Activated CD4-positive, alpha-beta T cell treated with anti-CD3 and anti-CD28 coated beads for 36 hours (primary cell): ENCODE measurements at regions of chr17 and their contacts with region 1.

Region 1: DNA sequence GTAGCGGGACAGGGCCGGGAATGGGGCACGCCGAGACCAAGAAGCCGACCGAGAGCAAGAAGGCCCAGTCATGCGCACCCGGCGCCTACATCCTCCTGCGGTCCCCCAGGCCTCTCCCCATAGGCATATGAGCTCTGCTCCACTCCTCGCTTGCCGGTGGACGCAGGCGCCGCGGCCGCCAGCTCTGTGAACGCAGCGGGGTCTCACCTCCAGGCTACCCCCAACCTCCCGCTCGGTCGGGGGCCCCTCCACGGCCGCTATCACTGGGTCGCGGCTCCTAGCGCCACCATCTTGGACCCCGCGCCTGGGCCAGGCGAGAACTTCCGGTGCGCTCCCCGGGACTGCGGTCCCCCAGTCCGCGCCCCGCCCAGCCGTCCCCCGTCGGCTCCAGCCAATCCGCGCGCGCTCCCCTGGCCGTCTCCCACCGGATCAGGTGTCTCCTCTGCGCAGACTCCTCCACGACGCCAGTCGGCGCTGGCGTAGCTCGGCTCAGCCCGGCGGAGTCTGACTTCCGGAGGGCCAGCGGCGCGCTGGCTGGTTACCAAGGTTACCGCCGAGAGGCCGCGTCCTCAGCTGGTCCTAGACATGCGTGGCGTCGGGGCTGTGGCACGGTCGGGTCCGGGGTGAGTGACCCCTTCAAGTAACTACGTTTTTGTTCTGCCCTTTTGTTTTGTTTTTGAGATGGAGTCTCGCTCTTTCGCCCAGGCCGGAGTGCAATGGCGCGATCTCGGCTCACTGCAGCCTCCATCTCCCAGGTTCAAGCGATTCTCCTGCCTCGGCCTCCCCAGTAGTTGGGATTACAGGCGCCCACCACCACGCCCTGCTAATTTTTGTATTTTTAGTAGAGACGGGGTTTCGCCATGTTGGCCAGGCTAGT is at the start of gene ZNF594:
- DNase-seq: peak; percentile 99
- ATAC-seq: peak; percentile 100
- H3K4me3 Mint-ChIP-seq: peak within 1 kb of the TSS; percentile 94
- H3K27ac Mint-ChIP-seq: peak within 1 kb of the TSS; percentile 88
- H3K4me1 Mint-ChIP-seq: peaks cover 27% of the 10 kb centered on the region
- H3K27me3 Mint-ChIP-seq: no peaks in the 10 kb centered on the region
- total RNA-seq, gene ZNF594: 8.0 to 8.4 TPM

Region 2: GRCh38 chr17:4263282-4264215 is 928.2 kb before region 1 on chr17 and contains the start of gene ANKFY1:
- CTCF ChIA-PET with region 1: no interaction called
- POLR2A ChIA-PET with region 1: no interaction called
- intact Hi-C with region 1: loop called in 1 of 2 experiments (anchors 5 kb)
- DNase-seq: peak; percentile 99
- ATAC-seq: peak; percentile 99
- H3K4me3 Mint-ChIP-seq: peak within 1 kb of the TSS; percentile 97
- H3K27ac Mint-ChIP-seq: peak within 1 kb of the TSS; percentile 96
- H3K4me1 Mint-ChIP-seq: peaks cover 35% of the 10 kb centered on the region
- H3K27me3 Mint-ChIP-seq: no peaks in the 10 kb centered on the region
- total RNA-seq, gene ANKFY1: 39.8 to 40.7 TPM

Region 3: GRCh38 chr17:4998027-4998741 is 193.6 kb before region 1 on chr17:
- CTCF ChIA-PET with region 1: no interaction called
- POLR2A ChIA-PET with region 1: no interaction called
- intact Hi-C with region 1: no loop called
- DNase-seq: peak; percentile 31
- ATAC-seq: no peak
- H3K4me3 Mint-ChIP-seq: peak overlapping the region; percentile 80
- H3K27ac Mint-ChIP-seq: peak overlapping the region; percentile 55
- H3K4me1 Mint-ChIP-seq: peaks cover 20% of the 10 kb centered on the region
- H3K27me3 Mint-ChIP-seq: no peaks in the 10 kb centered on the region

Region 4: DNA sequence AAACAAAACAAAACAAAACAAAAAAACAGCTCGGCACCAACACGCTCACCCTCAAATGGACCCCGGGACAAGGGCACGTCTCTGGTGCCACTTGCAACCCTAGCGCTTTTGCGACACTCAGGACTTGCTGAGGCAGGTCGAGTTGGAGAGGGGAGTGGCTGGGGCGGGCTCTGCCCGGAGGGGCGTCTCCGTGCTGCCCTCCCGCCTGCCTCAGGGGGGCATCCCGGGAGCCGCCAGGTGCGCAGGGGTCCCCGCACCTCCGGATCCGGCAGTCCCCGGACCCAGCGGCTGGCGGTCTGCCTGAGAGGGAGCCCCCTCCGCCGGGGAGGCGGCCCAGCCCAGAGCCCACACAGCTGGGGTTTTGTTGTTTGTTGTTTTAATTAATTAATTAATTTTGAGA is 156.5 kb before region 1 on chr17 and contains the start of gene SLC52A1:
- CTCF ChIA-PET with region 1: no interaction called
- POLR2A ChIA-PET with region 1: no interaction called
- intact Hi-C with region 1: no loop called
- DNase-seq: no peak
- ATAC-seq: no peak
- H3K4me3 Mint-ChIP-seq: no peak within 1 kb of the TSS
- H3K27ac Mint-ChIP-seq: no peak within 1 kb of the TSS
- H3K4me1 Mint-ChIP-seq: peaks cover 17% of the 10 kb centered on the region
- H3K27me3 Mint-ChIP-seq: peaks cover 3% of the 10 kb centered on the region
- total RNA-seq, gene SLC52A1: 0.16 to 0.26 TPM

Region 5: DNA sequence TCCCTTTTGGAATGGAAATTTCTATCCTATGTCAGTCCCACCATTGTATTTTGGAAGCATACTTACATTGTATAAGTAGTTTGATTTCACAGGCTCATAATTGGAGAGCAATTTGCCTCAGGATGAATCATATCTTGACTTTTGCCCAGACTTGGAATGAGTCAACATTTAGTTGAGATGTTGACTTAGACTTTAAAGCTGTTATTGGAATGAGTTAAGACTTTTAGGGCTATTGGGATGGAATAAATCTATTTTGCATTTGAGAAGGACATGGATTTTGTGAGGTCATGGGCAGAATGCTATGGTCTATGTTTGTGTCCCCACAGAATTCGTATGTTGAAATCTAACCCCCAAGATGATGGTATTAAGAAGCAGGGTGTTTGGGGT is 12.1 kb after region 1 on chr17:
- CTCF ChIA-PET with region 1: no interaction called
- POLR2A ChIA-PET with region 1: no interaction called
- intact Hi-C with region 1: no loop called
- DNase-seq: no peak
- ATAC-seq: peak; percentile 61
- H3K4me3 Mint-ChIP-seq: no peak overlapping the region
- H3K27ac Mint-ChIP-seq: no peak overlapping the region
- H3K4me1 Mint-ChIP-seq: peaks cover 5% of the 10 kb centered on the region
- H3K27me3 Mint-ChIP-seq: no peaks in the 10 kb centered on the region

Region 6: DNA sequence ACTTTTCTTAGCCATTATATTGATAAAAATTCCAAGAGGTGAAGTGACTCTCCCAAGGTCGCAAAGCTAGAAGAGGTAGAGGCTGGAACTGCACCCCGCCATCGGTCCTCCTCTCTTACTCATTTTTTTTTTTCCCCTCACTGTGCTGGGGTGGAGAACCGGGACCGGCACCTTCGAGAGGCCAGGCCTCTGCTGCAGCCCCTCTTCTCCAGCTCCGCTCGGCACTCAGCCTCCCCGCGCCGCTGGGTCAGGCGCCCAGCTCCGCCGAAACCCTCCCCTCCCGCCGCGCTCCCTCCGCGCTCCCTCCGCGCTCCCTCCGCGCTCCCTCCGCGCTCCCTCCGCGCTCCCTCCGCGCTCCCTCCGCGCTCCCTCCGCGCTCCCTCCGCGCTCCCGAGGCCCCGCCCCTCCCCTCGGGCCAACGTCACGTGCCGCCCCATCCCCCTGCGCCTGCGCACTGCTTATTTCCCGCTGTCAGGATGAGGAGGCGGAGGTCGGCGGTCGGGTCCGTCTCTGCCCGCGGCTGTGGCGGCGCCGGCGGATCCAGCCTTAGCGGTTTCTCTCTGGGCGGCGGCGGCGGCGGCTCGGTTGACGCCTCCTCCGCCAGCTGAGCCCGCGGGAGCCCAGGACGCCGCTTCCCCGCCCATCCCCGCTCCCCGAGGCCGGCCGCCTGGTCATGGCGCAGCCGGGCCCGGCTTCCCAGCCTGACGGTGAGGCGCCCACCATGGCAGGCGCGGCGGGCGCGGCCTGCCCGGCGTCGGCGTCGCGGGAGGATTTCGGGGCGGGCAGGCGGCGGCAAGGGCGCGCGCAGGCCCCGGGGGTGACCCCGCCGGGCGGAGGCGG is 90.3 kb after region 1 on chr17 and contains the start of gene RABEP1:
- CTCF ChIA-PET with region 1: interaction called, 3 read pairs
- POLR2A ChIA-PET with region 1: interaction called, 4 read pairs
- intact Hi-C with region 1: loop called in 1 of 2 experiments (anchors 2 kb)
- DNase-seq: peak; percentile 97
- ATAC-seq: peak; percentile 81
- H3K4me3 Mint-ChIP-seq: peak within 1 kb of the TSS; percentile 86
- H3K27ac Mint-ChIP-seq: peak within 1 kb of the TSS; percentile 90
- H3K4me1 Mint-ChIP-seq: peaks cover 32% of the 10 kb centered on the region
- H3K27me3 Mint-ChIP-seq: no peaks in the 10 kb centered on the region
- total RNA-seq, gene RABEP1: 60.4 to 66.2 TPM

Region 7: DNA sequence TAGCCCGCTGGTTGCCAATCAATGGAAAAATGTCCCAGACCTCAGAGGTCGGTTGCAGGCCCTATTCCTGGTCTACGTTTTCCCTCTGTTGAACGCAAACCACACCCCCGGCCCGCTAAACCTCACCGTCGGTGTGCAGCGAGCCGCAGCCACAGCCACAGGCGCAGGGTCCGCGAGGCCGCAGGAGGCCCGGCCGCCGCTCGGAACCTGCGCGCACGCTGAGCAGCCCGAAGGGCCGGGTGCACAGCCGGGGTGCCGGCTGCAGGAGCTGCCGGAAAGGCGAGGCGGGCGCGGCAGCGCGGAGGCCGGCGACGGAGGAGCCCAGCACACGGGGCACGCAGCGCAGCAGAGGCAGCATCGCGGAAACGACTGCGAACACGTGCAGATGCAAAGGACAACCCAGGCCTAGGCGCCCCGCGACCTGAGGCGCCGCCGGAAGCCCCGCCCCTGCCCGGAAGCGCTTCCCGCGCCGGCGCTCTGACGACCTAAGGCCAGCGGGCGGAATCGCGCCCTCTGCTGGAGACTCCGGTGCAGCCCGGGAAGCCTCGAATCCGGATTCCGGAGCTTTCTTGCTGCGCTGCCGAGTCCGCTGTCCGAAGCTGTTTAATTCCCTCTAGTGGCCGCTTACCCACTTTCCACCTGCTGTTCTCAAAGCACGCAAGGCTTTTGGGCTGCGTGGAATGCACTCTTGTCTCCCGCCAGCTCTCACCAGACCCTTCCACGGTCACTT is 247.1 kb after region 1 on chr17 and contains the start of gene C1QBP:
- CTCF ChIA-PET with region 1: interaction called, 6 read pairs
- POLR2A ChIA-PET with region 1: no interaction called
- intact Hi-C with region 1: loop called (anchors 1 to 5 kb)
- DNase-seq: peak; percentile 96
- ATAC-seq: peak; percentile 92
- H3K4me3 Mint-ChIP-seq: peak within 1 kb of the TSS; percentile 89
- H3K27ac Mint-ChIP-seq: peak within 1 kb of the TSS; percentile 92
- H3K4me1 Mint-ChIP-seq: peaks cover 44% of the 10 kb centered on the region
- H3K27me3 Mint-ChIP-seq: no peaks in the 10 kb centered on the region
- total RNA-seq, gene C1QBP: 432 to 457 TPM

Region 8: GRCh38 chr17:6443692-6444569 is 1252.2 kb after region 1 on chr17 and contains the start of gene PIMREG:
- CTCF ChIA-PET with region 1: no interaction called
- POLR2A ChIA-PET with region 1: no interaction called
- intact Hi-C with region 1: loop called in 1 of 2 experiments (anchors 5 kb)
- DNase-seq: peak; percentile 97
- ATAC-seq: peak; percentile 98
- H3K4me3 Mint-ChIP-seq: peak within 1 kb of the TSS; percentile 77
- H3K27ac Mint-ChIP-seq: peak within 1 kb of the TSS; percentile 90
- H3K4me1 Mint-ChIP-seq: peaks cover 12% of the 10 kb centered on the region
- H3K27me3 Mint-ChIP-seq: peaks cover 7% of the 10 kb centered on the region
- total RNA-seq, gene PIMREG: 8.4 to 10.0 TPM